ENCODE measurements at regions of chr19 and their contacts with region 1.

Region 1: GRCh38 chr19:9538183-9539058 is at the start of gene ZNF426:
- DNase-seq: peak; percentile 94
- H3K4me3 ChIP-seq: peak within 1 kb of the TSS; percentile 67 to 87 (median 78)
- H3K27ac ChIP-seq: peak within 1 kb of the TSS; percentile 90 to 96 (median 94)
- H3K4me1 ChIP-seq: peaks cover 14 to 26% (median 20%) of the 10 kb centered on the region in 4 donors
- H3K27me3 ChIP-seq: no peaks in the 10 kb centered on the region
- CTCF ChIP-seq: no peak
- EP300 ChIP-seq: no peak
- POLR2A ChIP-seq: no peak
- total RNA-seq, gene ZNF426: 13.7 to 19.4 (median 17.5) TPM

Region 2: GRCh38 chr19:9323919-9324583 is 214.4 kb before region 1 on chr19 and contains the start of gene ZNF559:
- intact Hi-C with region 1: loop called (anchors 10 kb)
- DNase-seq: peak; percentile 98
- H3K4me3 ChIP-seq: peak within 1 kb of the TSS; percentile 66 to 87 (median 72)
- H3K27ac ChIP-seq: peak within 1 kb of the TSS; percentile 85 to 92 (median 90)
- H3K4me1 ChIP-seq: peaks cover 7 to 20% (median 17%) of the 10 kb centered on the region in 4 donors
- H3K27me3 ChIP-seq: no peaks in the 10 kb centered on the region
- CTCF ChIP-seq: peak in 2 of 3 experiments; percentile 16 to 23
- EP300 ChIP-seq: no peak
- POLR2A ChIP-seq: no peak
- total RNA-seq, gene ZNF559: 8.8 to 18.9 (median 18.6) TPM

Region 3: GRCh38 chr19:9406798-9407352 is 131.5 kb before region 1 on chr19:
- intact Hi-C with region 1: no loop called
- DNase-seq: no peak
- H3K4me3 ChIP-seq: peak overlapping the region; percentile 52 to 67 (median 56)
- H3K27ac ChIP-seq: peak overlapping the region; percentile 50 to 62 (median 56)
- H3K4me1 ChIP-seq: peaks cover 6 to 15% (median 10%) of the 10 kb centered on the region in 4 donors
- H3K27me3 ChIP-seq: no peaks in the 10 kb centered on the region
- CTCF ChIP-seq: no peak
- EP300 ChIP-seq: no peak
- POLR2A ChIP-seq: no peak

Region 4: DNA sequence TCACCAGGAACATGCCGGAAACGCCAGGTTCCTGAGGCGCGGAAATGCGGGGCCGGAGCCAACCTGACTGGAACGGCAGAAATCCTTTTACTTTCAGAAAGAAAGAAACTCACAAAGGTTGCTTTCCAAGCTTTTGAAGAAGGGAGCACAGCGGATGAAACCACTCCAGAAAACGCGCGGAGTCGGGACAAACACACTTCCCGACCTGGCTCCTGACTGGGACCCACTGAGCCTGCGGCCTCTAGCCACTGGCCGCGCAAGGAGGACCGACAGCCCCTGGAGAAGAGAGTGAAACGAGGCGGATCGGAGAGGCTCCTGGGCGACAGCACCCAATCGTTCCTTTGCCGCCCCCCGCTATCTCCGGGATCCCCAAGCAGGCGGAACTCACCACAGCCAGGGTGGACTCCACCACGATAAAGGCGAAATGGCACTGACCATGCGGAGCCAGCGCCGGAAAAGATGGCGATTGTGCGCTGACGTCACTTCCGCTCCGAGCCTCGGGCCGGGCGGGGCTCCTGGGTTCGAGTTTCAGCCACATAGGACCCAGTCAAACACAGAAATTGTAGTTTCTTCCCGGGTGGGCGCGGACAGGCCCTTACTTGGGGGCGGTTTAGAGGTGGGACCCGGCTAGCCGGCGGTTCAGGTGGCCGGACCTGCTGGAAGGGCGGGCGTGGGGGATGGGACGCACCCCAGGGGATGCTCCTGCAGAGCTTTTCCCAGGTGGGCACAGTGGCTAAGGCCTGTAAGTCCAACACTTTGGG is 45.8 kb after region 1 on chr19 and contains the start of gene ZNF121:
- intact Hi-C with region 1: loop called (anchors 10 kb)
- DNase-seq: peak; percentile 98
- H3K4me3 ChIP-seq: peak within 1 kb of the TSS; percentile 70 to 81 (median 74)
- H3K27ac ChIP-seq: peak within 1 kb of the TSS; percentile 86 to 96 (median 91)
- H3K4me1 ChIP-seq: peaks cover 12 to 35% (median 23%) of the 10 kb centered on the region in 4 donors
- H3K27me3 ChIP-seq: peaks cover 0 to 15% (median 0%) of the 10 kb centered on the region in 4 donors
- CTCF ChIP-seq: no peak
- EP300 ChIP-seq: no peak
- POLR2A ChIP-seq: peak; percentile 41
- total RNA-seq, gene ZNF121: 18.3 to 31.1 (median 25.5) TPM

Measured in esophagus muscularis mucosa (tissue), 4 donors.